Right cardiac atrium (tissue), 5 donors: ENCODE measurements at regions of chr3 and their contacts with region 1.

Region 1: GRCh38 chr3:140736863-140737460 is 59.1 kb downstream of the TRIM42 start:
- DNase-seq: peak; percentile 59 to 86 (median 73)
- ATAC-seq: peak; percentile 56 to 82
- H3K4me3 ChIP-seq: no peak overlapping the region
- H3K27ac ChIP-seq: no peak overlapping the region
- H3K4me1 ChIP-seq: no peaks in the 10 kb centered on the region
- H3K27me3 ChIP-seq: no peaks in the 10 kb centered on the region

Region 2: DNA sequence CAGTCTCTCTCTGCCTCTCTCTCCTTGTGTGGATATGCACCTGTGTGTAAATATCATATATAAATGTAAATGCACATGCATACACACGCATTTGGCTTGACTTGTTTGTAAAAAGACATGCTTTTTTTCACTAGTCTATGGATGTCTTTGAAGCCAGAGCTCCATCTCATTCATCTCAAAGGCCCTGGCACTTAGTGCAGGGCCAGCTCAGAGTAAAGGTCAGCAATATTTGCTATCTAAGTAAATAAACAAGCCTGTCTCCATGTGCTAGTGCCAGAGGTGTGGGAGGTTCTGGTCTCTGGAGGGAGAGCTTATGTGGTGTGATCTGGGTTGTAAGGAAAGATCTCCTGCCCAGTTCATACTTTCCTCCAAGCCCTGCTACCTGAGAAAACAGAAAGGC is 796.3 kb before region 1 on chr3:
- intact Hi-C with region 1: loop called in 2 of 4 experiments (anchors 10 kb)
- DNase-seq: no peak
- ATAC-seq: peak; percentile 21 to 68
- H3K4me3 ChIP-seq: no peak overlapping the region
- H3K27ac ChIP-seq: no peak overlapping the region
- H3K4me1 ChIP-seq: peaks cover 2% of the 10 kb centered on the region
- H3K27me3 ChIP-seq: no peaks in the 10 kb centered on the region

Region 3: GRCh38 chr3:140552898-140553297 is 184.1 kb before region 1 on chr3:
- intact Hi-C with region 1: loop called in 1 of 4 experiments (anchors 2 kb)
- DNase-seq: no peak
- ATAC-seq: peak; percentile 71 to 81
- H3K4me3 ChIP-seq: no peak overlapping the region
- H3K27ac ChIP-seq: no peak overlapping the region
- H3K4me1 ChIP-seq: no peaks in the 10 kb centered on the region
- H3K27me3 ChIP-seq: no peaks in the 10 kb centered on the region

Region 4: GRCh38 chr3:140794507-140794906 is 57.5 kb after region 1 on chr3:
- intact Hi-C with region 1: no loop called
- DNase-seq: no peak
- ATAC-seq: no peak
- H3K4me3 ChIP-seq: no peak overlapping the region
- H3K27ac ChIP-seq: no peak overlapping the region
- H3K4me1 ChIP-seq: no peaks in the 10 kb centered on the region
- H3K27me3 ChIP-seq: no peaks in the 10 kb centered on the region